Transverse colon (tissue), 4 donors: ENCODE measurements at regions of chr16 and their contacts with region 1.

Region 1: DNA sequence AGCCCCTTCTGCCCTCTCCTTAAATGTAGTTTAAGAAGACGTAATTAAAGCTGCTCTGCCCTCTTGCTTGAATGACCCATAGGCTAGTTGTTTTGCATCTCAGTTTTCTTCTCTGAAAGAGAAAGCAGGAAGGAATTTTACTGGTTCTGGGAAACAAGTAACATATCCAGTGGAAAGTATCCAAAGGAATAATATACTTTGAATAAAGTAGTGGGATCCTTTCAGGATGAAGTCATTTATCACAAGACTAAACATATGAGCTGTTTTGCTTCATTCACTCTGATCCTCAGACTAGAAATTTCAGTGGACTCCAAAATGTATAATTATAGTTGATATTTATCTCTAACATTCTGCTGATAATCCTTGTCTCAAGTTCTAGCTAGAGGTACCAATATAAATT is 1297.6 kb upstream of the GOT2 start:
- DNase-seq: no peak
- H3K4me3 ChIP-seq: no peak overlapping the region
- H3K27ac ChIP-seq: no peak overlapping the region
- H3K4me1 ChIP-seq: no peaks in the 10 kb centered on the region
- H3K27me3 ChIP-seq: no peaks in the 10 kb centered on the region
- CTCF ChIP-seq: no peak
- EP300 ChIP-seq: no peak
- POLR2A ChIP-seq: no peak

Region 2: GRCh38 chr16:59355704-59356103 is 676.0 kb before region 1 on chr16:
- in situ Hi-C with region 1: no loop called
- intact Hi-C with region 1: no loop called
- DNase-seq: no peak
- H3K4me3 ChIP-seq: no peak overlapping the region
- H3K27ac ChIP-seq: no peak overlapping the region
- H3K4me1 ChIP-seq: no peaks in the 10 kb centered on the region
- H3K27me3 ChIP-seq: no peaks in the 10 kb centered on the region
- CTCF ChIP-seq: no peak
- EP300 ChIP-seq: no peak
- POLR2A ChIP-seq: no peak

Region 3: DNA sequence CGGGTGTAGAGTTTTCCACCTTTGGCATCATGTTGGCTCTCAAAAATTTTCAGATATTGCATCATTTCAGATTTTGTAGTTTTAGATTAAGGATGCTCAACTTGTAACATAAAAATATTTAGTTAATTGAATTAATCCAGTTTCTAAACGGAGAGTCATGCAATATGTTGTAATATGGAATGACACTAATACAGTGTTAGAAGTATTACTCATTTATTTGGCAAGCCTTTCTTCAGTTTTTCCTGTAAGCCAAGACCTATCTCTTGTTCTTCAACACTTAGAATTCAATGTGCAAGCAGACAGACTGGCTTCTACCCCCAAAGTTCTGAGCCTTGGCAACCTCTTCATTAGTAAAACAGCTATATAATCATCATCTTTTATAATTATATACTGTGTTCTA is 312.6 kb before region 1 on chr16:
- in situ Hi-C with region 1: no loop called
- intact Hi-C with region 1: no loop called
- DNase-seq: no peak
- H3K4me3 ChIP-seq: no peak overlapping the region
- H3K27ac ChIP-seq: no peak overlapping the region
- H3K4me1 ChIP-seq: no peaks in the 10 kb centered on the region
- H3K27me3 ChIP-seq: no peaks in the 10 kb centered on the region
- CTCF ChIP-seq: no peak
- EP300 ChIP-seq: no peak
- POLR2A ChIP-seq: no peak

Region 4: GRCh38 chr16:60142619-60143347 is 111.0 kb after region 1 on chr16:
- in situ Hi-C with region 1: loop called in 1 of 4 experiments (anchors 25 kb)
- intact Hi-C with region 1: no loop called
- DNase-seq: no peak
- H3K4me3 ChIP-seq: no peak overlapping the region
- H3K27ac ChIP-seq: no peak overlapping the region
- H3K4me1 ChIP-seq: no peaks in the 10 kb centered on the region
- H3K27me3 ChIP-seq: no peaks in the 10 kb centered on the region
- CTCF ChIP-seq: no peak
- EP300 ChIP-seq: no peak
- POLR2A ChIP-seq: no peak